Activated CD8-positive, alpha-beta T cell treated with anti-CD3 and anti-CD28 coated beads, Interleukin-2, amount 10 ng/mL, durations not matched to agents 7 days and 5 days (primary cell): ENCODE measurements at regions of chr20 and their contacts with region 1.

Region 1: DNA sequence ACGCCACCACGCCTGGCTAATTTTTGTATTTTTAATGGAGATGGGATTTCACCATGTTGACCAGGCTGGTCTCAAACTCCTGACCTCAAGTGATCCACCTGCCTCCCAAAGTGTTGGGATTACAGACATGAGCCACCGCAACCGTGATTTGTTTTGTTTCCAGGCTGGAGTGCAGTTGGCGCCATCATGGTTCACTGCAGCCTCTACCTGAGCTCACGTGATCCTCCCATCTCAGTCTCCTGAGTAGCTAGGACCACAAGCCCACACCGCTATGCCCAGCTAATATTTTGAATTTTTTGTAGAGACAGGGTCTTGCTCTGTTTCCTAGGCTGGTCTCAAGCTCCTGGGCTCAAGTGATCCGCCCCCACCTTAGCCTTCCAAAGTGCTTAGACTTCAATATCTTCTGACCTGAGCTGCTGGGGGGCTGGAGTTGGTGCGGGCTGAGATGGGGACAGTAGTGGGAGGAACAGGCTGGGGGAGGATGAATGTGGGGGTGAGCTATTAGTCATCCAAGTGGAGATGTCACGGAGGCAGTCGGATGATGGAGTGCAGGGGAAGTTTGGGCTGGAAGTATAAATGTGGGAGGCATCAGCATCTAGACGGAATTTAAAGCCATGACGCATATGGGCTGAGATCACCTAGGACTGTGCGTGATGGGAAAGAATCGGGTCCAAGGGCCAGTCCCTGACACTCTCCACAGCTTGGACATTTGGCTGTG is 23.1 kb upstream of the ZMYND8 start:
- DNase-seq: no peak
- ATAC-seq: no peak
- H3K4me3 Mint-ChIP-seq: no peak overlapping the region
- H3K27ac Mint-ChIP-seq: peak overlapping the region; percentile 78
- H3K4me1 Mint-ChIP-seq: peaks cover 34% of the 10 kb centered on the region
- H3K27me3 Mint-ChIP-seq: no peaks in the 10 kb centered on the region

Region 2: GRCh38 chr20:47205577-47206498 is 173.8 kb before region 1 on chr20:
- CTCF ChIA-PET with region 1: interaction called, 146 read pairs
- POLR2A ChIA-PET with region 1: no interaction called
- DNase-seq: peak; percentile 74
- ATAC-seq: peak; percentile 68
- H3K4me3 Mint-ChIP-seq: no peak overlapping the region
- H3K27ac Mint-ChIP-seq: peak overlapping the region; percentile 56
- H3K4me1 Mint-ChIP-seq: peaks cover 7% of the 10 kb centered on the region
- H3K27me3 Mint-ChIP-seq: no peaks in the 10 kb centered on the region

Region 3: DNA sequence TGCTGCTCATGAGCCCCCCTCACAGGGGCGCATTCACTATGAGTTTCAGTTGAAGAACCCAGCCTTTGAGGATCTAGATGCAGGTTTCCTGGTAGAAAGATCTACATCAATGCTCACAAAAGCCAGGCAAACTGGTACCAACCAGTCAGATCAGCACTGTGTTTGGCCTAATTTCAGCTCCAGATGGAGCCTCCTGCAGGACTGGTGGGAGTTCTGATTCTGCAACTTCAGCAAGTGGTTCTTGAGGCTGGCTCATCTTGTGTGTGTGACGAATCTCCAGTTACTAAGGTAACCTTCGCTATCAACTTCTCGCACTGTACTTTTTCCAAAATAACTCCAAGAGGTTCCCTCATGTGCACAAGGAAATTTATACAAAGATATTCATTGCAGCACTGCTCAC is 141.9 kb before region 1 on chr20:
- CTCF ChIA-PET with region 1: interaction called, 12 read pairs
- POLR2A ChIA-PET with region 1: no interaction called
- DNase-seq: no peak
- ATAC-seq: no peak
- H3K4me3 Mint-ChIP-seq: no peak overlapping the region
- H3K27ac Mint-ChIP-seq: no peak overlapping the region
- H3K4me1 Mint-ChIP-seq: no peaks in the 10 kb centered on the region
- H3K27me3 Mint-ChIP-seq: no peaks in the 10 kb centered on the region

Region 4: DNA sequence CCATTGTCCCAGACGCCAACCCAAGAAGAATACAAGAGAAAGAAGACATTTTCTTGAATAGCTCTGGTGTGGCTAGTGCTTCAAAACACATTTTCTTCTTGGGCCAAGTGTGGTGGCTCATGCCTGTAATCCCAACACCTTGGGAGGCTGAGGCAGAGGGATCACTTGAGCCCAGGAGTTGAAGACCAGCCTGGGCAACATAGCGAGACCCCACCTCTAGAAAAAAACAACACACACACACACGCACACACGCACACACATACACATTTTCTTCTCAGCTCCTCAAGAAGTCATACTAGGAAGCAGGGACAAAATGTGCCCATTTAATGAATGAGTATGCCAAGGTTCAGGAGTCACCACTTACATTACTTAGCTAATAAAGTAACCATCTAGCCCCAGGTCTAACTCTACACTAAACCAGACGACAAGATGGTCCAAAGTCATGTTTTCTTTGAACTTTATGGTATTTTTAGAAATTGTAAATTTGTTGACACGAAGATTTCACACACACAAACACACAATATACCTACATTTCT is 91.9 kb before region 1 on chr20:
- CTCF ChIA-PET with region 1: interaction called, 63 read pairs
- POLR2A ChIA-PET with region 1: no interaction called
- DNase-seq: no peak
- ATAC-seq: no peak
- H3K4me3 Mint-ChIP-seq: no peak overlapping the region
- H3K27ac Mint-ChIP-seq: no peak overlapping the region
- H3K4me1 Mint-ChIP-seq: no peaks in the 10 kb centered on the region
- H3K27me3 Mint-ChIP-seq: no peaks in the 10 kb centered on the region

Region 5: DNA sequence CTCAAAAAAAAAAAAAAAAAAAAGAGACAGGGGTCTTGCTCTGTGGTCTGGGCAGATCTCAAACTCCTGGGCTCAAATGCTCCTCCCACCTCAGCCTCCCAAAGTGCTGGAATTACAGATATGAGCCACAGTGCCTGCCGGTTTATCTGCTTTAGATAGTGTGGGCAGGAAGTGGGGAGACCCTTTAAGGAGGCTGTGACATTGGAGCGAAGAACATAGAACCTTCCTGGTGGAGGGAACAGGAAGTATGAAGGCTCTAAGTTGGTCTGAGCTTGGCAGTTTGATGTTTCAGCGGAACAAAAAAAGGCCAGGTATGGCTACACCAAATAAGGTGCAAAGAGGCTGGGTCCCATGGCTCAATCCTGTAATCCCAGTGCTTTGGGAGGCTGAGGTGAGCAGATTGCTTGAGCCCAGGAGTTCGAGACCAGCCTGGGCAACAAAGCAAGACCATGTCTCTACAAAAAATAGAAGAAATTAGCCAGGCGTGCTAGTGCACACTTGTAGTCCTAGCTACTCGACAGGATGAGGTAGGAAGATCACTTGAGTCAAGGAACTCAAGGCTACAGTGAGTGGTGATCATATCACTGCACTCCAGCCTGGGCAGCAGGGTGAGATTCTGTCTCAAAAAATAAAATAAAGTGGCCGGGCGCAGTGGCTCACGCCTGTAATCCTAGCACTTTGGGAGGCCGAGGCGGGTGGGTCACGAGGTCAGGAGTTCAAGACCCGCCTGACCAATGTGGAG is 14.4 kb before region 1 on chr20:
- CTCF ChIA-PET with region 1: interaction called, 206 read pairs
- POLR2A ChIA-PET with region 1: no interaction called
- DNase-seq: no peak
- ATAC-seq: peak; percentile 68
- H3K4me3 Mint-ChIP-seq: peak overlapping the region; percentile 9
- H3K27ac Mint-ChIP-seq: peak overlapping the region; percentile 79
- H3K4me1 Mint-ChIP-seq: peaks cover 22% of the 10 kb centered on the region
- H3K27me3 Mint-ChIP-seq: no peaks in the 10 kb centered on the region

Region 6: DNA sequence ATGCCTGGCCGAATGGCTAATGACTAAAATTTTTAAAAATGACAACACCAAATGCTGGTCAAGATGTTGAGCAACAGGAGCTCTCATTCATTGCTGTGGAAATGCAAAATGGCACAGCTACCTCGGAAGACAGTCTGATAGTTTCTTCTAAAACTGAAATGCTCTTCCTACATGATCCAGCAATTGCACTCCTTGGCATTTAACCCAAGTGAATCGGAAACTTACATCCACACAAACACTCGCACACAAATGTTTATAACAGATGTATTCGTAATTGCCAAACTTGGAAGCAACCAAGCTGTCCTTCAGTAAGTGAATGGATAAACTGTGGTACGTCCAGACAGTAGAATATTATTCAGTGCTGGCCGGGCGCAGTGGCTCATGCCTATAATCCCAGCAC is 65.7 kb after region 1 on chr20:
- CTCF ChIA-PET with region 1: interaction called, 14 read pairs
- POLR2A ChIA-PET with region 1: no interaction called
- DNase-seq: no peak
- ATAC-seq: no peak
- H3K4me3 Mint-ChIP-seq: no peak overlapping the region
- H3K27ac Mint-ChIP-seq: no peak overlapping the region
- H3K4me1 Mint-ChIP-seq: no peaks in the 10 kb centered on the region
- H3K27me3 Mint-ChIP-seq: no peaks in the 10 kb centered on the region

Region 7: GRCh38 chr20:47508278-47508677 is 128.7 kb after region 1 on chr20:
- CTCF ChIA-PET with region 1: interaction called, 24 read pairs
- POLR2A ChIA-PET with region 1: no interaction called
- DNase-seq: no peak
- ATAC-seq: peak; percentile 50
- H3K4me3 Mint-ChIP-seq: peak overlapping the region; percentile 62
- H3K27ac Mint-ChIP-seq: peak overlapping the region; percentile 83
- H3K4me1 Mint-ChIP-seq: peaks cover 69% of the 10 kb centered on the region
- H3K27me3 Mint-ChIP-seq: no peaks in the 10 kb centered on the region

Region 8: DNA sequence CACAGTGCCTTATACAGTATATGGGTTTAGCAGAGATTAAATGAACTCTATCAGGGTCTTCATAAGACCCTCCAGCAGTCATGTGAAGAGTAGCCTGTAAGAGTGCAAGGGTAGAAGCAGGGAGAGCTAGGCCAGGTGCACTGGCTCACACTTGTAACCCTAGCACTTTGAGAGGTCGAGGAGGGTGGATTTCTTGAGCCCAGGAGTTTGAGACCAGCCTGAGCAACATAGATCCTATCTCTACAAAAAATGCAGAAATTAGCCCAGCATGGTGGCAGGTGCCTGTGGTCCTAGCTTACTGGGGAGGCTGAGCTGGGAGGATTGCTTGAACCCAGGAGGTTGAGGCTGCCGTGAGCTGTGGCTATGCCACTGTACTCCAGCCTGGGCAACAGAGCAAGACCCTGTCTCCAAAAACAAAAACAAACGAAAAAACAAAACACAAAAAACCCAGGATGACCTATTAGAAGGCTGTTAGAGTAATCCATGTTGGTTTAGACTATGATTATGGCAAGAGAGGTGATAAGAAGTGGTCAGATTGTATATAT is 154.0 kb after region 1 on chr20:
- CTCF ChIA-PET with region 1: no interaction called
- POLR2A ChIA-PET with region 1: no interaction called
- DNase-seq: no peak
- ATAC-seq: no peak
- H3K4me3 Mint-ChIP-seq: no peak overlapping the region
- H3K27ac Mint-ChIP-seq: peak overlapping the region; percentile 5
- H3K4me1 Mint-ChIP-seq: peaks cover 18% of the 10 kb centered on the region
- H3K27me3 Mint-ChIP-seq: no peaks in the 10 kb centered on the region